Activated CD4-positive, alpha-beta T cell treated with anti-CD3 and anti-CD28 coated beads, Interleukin-2, amount 10 ng/mL, durations not matched to agents 24 days and 14 days (primary cell): ENCODE measurements at regions of chr7 and their contacts with region 1.

Region 1: DNA sequence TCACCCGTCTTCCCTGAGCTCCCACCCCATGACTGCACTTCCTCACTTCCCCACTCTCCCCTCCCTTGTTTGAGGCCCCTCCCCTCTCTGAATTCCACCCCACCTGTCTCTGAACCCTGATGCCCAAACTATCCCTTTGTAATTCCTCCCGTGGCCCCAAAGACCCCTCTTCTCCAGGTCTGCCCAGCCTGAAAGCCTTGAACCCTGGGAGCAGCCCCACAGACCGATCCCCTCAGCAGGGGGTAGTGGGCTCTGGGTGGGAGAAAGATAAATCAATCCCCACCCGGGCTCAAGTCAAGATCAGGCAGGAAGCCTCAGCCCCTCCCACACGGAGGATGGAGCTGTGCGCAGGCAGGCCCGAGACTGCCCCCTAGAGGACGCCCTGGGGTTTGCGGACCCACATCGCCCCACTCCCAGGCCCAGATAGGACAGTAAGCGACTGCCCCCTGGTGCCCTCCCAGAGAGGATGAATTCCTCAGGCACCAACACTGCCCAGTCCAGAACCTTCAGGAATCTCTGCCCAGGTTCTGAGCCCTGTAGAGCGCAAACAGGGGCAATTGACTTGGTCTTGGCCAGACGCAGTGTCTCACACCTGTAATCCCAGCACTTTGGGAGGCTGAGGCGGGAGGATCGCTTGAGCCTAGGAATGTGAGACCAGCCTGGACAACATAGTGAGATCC is 11.7 kb downstream of the HSPB1 start:
- DNase-seq: peak; percentile 98
- H3K4me3 Mint-ChIP-seq: peak overlapping the region; percentile 68
- H3K27ac Mint-ChIP-seq: peak overlapping the region; percentile 85
- H3K4me1 Mint-ChIP-seq: peaks cover 20% of the 10 kb centered on the region
- H3K27me3 Mint-ChIP-seq: no peaks in the 10 kb centered on the region

Region 2: DNA sequence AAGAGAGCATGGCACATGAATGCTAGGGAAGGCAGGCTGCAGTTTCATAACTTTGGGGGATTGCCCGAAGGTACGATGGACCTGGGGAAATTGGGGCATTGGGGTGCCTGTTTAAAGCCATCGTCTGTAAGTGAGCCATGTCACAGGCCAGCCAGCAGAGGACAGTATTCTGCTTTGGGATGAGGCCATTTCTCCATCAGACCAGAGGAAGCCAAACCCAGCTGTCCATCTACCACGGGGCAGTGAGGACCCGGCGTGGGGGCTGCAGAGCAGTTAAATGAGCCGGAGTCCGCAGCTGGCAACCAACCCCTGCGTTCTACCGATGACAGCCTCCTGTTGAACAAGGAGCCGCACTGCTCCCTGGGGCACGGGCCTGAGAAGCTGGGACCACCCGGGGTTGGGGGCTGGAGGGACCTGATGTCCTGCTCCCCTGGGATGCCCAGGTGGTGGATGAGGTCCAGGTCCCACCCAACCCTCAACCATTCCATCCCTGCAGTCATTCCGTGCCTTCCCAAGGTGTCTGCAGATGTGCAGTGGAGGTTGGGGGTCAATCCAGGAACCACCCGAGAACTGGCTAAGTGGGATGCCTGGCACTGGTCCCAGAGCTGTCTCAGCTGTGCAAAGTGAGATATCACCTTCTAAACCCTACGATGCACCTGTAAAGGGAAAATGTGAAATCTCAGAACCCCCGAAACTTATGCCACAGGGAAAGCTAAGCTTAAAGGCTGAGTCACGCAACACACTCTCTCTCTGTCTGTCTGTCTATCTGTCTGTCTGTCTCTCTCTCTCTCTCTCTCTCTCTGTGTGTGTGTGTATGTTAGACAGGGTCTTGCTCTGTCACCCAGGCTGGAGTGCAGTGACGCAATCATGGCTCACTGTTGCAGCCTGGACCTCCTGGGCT is 447.4 kb before region 1 on chr7:
- intact Hi-C with region 1: loop called (anchors 5 kb)
- DNase-seq: peak; percentile 83
- H3K4me3 Mint-ChIP-seq: no peak overlapping the region
- H3K27ac Mint-ChIP-seq: no peak overlapping the region
- H3K4me1 Mint-ChIP-seq: peaks cover 23% of the 10 kb centered on the region
- H3K27me3 Mint-ChIP-seq: peaks cover 13% of the 10 kb centered on the region

Region 3: DNA sequence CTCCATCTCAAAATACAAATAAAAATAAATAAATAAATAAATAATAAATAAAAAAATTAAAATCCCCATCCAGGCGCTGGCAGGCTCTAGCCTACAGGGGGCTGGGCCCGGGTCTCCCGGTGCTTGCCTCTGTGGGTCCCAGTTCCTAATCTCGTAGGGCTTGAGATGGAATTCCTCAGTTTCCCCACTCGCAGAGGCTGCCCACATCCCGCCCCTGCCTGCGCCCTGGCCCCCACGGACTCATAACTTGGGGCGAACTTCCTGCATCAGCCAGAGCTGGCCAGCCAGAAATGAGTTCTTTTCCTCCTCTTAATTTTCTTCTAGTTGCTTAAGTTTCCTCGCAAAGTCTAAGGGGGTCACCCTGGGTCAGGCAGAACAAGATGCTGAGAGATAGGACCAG is 134.5 kb before region 1 on chr7:
- intact Hi-C with region 1: loop called (anchors 1 kb)
- DNase-seq: no peak
- H3K4me3 Mint-ChIP-seq: no peak overlapping the region
- H3K27ac Mint-ChIP-seq: no peak overlapping the region
- H3K4me1 Mint-ChIP-seq: peaks cover 3% of the 10 kb centered on the region
- H3K27me3 Mint-ChIP-seq: no peaks in the 10 kb centered on the region

Region 4: DNA sequence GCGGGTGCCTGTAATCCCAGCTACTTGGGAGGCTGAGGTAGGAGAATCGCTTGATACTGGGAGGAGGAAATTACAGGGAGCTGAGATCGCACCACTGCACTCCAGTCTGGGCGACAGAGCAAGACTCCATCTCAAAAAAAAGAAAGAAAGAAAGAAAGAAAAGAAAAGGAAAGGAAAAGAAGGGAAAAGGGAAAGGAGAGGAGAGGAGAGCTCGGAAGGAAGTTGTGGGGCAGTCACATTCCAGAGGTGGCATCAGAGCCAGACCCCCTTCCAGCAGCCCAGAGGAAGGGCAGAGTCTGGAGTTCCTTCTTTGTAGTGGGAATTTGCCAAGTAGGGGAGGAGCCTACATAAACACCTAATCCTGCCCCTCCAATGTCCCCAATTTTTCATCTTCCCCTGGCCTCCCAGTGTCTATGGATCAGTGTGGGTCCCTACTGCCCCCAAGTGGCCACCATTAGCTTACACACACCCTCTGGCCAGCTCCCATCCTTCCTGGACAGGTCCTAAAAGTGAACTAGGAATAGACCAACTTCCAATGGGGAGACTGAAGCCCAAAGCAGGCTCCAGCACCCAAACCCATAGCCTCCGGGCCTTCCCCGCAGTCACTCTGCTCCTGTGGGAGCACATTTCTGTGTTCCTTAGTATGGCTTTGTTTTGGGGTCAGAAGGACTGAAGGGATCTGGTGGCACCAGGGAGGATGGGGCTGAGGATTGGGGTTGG is 51.3 kb before region 1 on chr7:
- intact Hi-C with region 1: loop called (anchors 2 kb)
- DNase-seq: peak; percentile 80
- H3K4me3 Mint-ChIP-seq: no peak overlapping the region
- H3K27ac Mint-ChIP-seq: no peak overlapping the region
- H3K4me1 Mint-ChIP-seq: peaks cover 2% of the 10 kb centered on the region
- H3K27me3 Mint-ChIP-seq: peaks cover 22% of the 10 kb centered on the region

Region 5: GRCh38 chr7:76302347-76303201 is 11.6 kb before region 1 on chr7 and contains the start of gene HSPB1:
- intact Hi-C with region 1: loop called (anchors 1 kb)
- DNase-seq: peak; percentile 86
- H3K4me3 Mint-ChIP-seq: peak within 1 kb of the TSS; percentile 93
- H3K27ac Mint-ChIP-seq: peak within 1 kb of the TSS; percentile 92
- H3K4me1 Mint-ChIP-seq: peaks cover 16% of the 10 kb centered on the region
- H3K27me3 Mint-ChIP-seq: peaks cover 9% of the 10 kb centered on the region
- total RNA-seq, gene HSPB1: 112 and 117 TPM in 2 replicates

Region 6: GRCh38 chr7:76333511-76334101 is 19.4 kb after region 1 on chr7:
- intact Hi-C with region 1: no loop called
- DNase-seq: no peak
- H3K4me3 Mint-ChIP-seq: no peak overlapping the region
- H3K27ac Mint-ChIP-seq: no peak overlapping the region
- H3K4me1 Mint-ChIP-seq: peaks cover 25% of the 10 kb centered on the region
- H3K27me3 Mint-ChIP-seq: no peaks in the 10 kb centered on the region

Region 7: GRCh38 chr7:76383089-76383944 is 69.1 kb after region 1 on chr7:
- intact Hi-C with region 1: no loop called
- DNase-seq: no peak
- H3K4me3 Mint-ChIP-seq: no peak overlapping the region
- H3K27ac Mint-ChIP-seq: no peak overlapping the region
- H3K4me1 Mint-ChIP-seq: peaks cover 10% of the 10 kb centered on the region
- H3K27me3 Mint-ChIP-seq: no peaks in the 10 kb centered on the region

Region 8: GRCh38 chr7:77940647-77941046 is 1626.5 kb after region 1 on chr7:
- intact Hi-C with region 1: no loop called
- DNase-seq: no peak
- H3K4me3 Mint-ChIP-seq: no peak overlapping the region
- H3K27ac Mint-ChIP-seq: no peak overlapping the region
- H3K4me1 Mint-ChIP-seq: peaks cover 4% of the 10 kb centered on the region
- H3K27me3 Mint-ChIP-seq: no peaks in the 10 kb centered on the region